Aorta (tissue), 5 donors: ENCODE measurements at regions of chr17 and their contacts with region 1.

Region 1: GRCh38 chr17:38485146-38485468 is 56.8 kb downstream of the ARHGAP23 start:
- DNase-seq: no peak
- ATAC-seq: no peak
- H3K4me3 ChIP-seq: no peak overlapping the region
- H3K27ac ChIP-seq: peak overlapping the region in 1 of 2 donors; percentile 7
- H3K4me1 ChIP-seq: no peaks in the 10 kb centered on the region
- H3K27me3 ChIP-seq: no peaks in the 10 kb centered on the region

Region 2: DNA sequence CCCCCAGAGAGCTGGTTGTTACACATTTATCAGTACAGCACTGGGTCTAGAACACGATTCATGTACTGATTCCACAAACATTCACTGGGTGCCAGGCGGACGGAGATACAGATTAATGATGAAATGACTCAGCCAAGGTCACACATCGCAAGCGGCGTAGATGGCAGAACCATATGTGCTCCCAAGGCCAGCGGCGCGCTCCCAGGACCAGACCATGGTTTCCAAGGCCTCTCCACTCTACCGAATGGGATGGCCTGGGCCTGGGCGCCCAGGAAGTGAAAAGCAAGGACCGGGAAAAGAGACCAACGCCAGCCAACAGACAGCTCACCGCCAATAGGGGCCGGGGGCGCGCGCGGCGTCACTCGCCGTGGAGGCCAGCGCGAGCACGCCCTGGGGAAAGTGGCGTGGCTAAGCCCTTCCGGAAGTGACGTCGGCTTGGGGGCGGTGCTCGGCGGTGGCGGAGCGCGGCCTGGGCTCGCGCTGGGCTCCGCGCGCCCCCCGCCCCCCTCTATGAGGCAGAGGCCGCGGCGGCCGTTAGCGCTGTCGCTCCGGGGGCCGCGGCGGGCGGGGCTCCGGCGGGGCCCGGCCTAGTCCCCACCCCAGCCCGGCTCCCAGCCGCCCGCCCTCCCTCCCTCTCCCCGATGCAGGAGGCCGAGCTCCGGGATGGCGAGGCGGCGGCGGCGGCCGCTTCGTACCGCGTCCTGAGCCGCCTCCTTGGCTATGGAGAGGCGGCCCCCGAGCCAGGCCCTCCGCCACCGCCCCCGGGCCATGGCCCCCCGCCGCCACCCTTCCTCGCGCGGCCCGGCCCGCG is 133.5 kb before region 1 on chr17 and contains the start of gene SOCS7:
- intact Hi-C with region 1: no loop called
- DNase-seq: peak; percentile 96 to 99
- ATAC-seq: peak; percentile 96
- H3K4me3 ChIP-seq: peak within 1 kb of the TSS; percentile 94 to 100
- H3K27ac ChIP-seq: peak within 1 kb of the TSS; percentile 58 to 62
- H3K4me1 ChIP-seq: peaks cover 2 to 3% of the 10 kb centered on the region in 2 donors
- H3K27me3 ChIP-seq: no peaks in the 10 kb centered on the region
- total RNA-seq, gene SOCS7: 16.7 to 17.2 TPM

Region 3: DNA sequence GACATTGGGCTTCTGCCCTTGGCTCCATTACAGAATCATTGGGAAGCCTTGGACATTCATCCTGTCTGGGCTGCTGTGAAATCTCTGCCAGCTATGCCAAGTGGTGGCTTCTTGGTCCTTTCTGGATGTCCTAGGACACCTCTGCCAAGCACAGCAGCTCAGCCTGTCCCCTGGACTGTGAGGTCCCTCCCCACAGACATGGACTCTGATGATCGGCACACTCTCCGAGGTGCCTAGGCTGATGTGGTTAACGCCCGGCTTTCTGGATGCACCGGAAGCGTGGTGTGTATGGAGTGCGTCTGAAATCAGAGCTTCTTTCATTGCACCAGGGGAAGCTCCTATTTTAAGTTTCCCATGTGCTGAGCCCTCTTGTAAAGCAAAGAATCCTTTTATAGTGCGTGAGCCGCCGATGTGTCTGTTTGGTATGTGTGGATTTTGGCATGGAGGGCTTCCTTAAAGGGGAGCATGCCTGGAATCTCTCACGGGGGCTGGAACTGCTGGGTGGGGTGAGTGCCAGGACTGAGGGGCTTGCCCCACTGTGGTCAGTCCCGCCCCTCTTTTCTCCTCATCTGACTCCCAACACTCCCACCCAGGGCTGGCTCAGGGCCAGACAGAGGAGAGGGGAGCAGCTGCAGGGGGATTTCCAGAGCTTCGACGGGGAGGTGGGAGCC is 63.8 kb before region 1 on chr17:
- intact Hi-C with region 1: loop called (anchors 5 kb)
- DNase-seq: peak; percentile 67 to 87
- ATAC-seq: peak; percentile 57
- H3K4me3 ChIP-seq: no peak overlapping the region
- H3K27ac ChIP-seq: peak overlapping the region in 1 of 2 donors; percentile 87
- H3K4me1 ChIP-seq: no peaks in the 10 kb centered on the region
- H3K27me3 ChIP-seq: no peaks in the 10 kb centered on the region

Region 4: DNA sequence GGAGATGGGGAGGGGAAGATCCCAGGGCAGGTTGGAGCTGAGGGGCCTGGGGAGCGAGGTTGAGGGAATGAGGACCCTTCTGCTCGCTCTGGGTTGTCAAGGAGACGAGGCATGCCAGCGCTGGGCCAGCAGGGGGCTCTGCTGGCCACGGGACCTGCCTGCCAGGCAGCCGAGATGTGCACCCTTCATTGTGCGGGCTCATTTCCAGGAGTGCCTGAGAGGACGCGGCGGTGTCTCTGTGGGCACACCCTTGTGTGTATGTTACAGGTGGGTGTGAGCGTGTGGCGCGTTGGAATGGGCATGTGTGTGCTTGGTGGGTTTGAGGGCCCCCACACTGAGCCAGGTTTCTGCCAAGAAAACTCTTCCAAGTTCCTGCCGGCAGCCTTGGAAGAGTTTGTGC is 41.0 kb before region 1 on chr17:
- intact Hi-C with region 1: loop called (anchors 2 to 5 kb)
- DNase-seq: peak; percentile 79 to 88
- ATAC-seq: peak; percentile 76
- H3K4me3 ChIP-seq: no peak overlapping the region
- H3K27ac ChIP-seq: no peak overlapping the region
- H3K4me1 ChIP-seq: peaks cover 0 to 2% of the 10 kb centered on the region in 2 donors
- H3K27me3 ChIP-seq: no peaks in the 10 kb centered on the region

Region 5: DNA sequence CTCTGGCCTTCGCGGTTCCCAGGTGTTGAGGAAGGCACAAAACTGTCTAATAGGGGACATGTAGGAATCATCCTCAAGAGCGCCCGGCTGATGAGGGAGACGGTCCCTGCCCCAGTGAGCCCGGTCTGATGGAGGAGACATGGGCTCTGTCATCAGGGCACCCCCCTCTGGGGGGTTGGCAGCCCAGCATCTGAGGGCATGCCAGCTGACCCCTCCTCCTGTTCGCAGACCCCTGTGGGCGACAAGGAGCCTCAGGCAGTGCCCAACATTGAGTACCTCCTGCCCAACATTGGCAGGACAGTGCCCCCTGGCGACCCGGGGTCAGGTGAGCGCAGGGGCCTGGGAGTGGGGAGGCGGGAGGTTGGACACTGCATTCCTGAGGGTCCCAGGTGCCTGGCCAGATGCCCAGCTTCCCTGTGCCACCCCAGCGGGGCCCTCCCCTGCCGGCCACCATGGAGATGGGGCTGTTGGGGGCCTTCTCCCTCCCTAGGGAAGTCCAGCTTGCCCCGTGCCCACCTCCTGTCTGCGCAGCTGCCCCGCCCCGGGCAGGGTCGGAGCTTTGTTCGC is 13.2 kb after region 1 on chr17:
- intact Hi-C with region 1: no loop called
- DNase-seq: no peak
- ATAC-seq: no peak
- H3K4me3 ChIP-seq: no peak overlapping the region
- H3K27ac ChIP-seq: no peak overlapping the region
- H3K4me1 ChIP-seq: no peaks in the 10 kb centered on the region
- H3K27me3 ChIP-seq: no peaks in the 10 kb centered on the region